Psoas muscle (tissue), 8 donors: ENCODE measurements at regions of chr9 and their contacts with region 1.

Region 1: GRCh38 chr9:120619751-120620655 is 40.0 kb upstream of the CDK5RAP2 start:
- DNase-seq: no peak
- ATAC-seq: peak; percentile 81 to 95 (median 83)
- H3K4me3 ChIP-seq: no peak overlapping the region
- H3K27ac ChIP-seq: no peak overlapping the region
- H3K4me1 ChIP-seq: peaks cover 3% of the 10 kb centered on the region
- H3K27me3 ChIP-seq: no peaks in the 10 kb centered on the region
- CTCF ChIP-seq: peak; percentile 87

Region 2: DNA sequence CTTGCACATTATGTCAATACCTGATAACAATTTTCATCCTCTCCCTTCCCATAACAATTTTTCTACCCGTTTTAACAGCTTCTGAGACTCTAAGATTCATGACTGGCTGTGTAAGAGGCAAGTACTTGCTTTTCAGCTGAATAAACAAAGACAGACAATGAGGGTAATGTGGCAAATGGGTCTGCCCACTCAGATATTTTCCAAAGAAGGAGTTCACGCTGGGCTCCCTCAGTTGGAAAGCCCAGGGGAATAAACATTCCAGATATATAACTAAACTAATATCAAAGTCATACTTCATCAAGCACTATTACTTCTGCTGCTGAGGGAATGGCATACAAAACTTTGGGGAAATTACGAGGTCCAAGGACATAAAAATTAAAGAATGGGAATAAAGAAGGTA is 69.9 kb after region 1 on chr9:
- intact Hi-C with region 1: loop called in 1 of 2 experiments (anchors 10 kb)
- DNase-seq: no peak
- ATAC-seq: no peak
- H3K4me3 ChIP-seq: no peak overlapping the region
- H3K27ac ChIP-seq: no peak overlapping the region
- H3K4me1 ChIP-seq: peaks cover 11% of the 10 kb centered on the region
- H3K27me3 ChIP-seq: no peaks in the 10 kb centered on the region
- CTCF ChIP-seq: no peak

Region 3: DNA sequence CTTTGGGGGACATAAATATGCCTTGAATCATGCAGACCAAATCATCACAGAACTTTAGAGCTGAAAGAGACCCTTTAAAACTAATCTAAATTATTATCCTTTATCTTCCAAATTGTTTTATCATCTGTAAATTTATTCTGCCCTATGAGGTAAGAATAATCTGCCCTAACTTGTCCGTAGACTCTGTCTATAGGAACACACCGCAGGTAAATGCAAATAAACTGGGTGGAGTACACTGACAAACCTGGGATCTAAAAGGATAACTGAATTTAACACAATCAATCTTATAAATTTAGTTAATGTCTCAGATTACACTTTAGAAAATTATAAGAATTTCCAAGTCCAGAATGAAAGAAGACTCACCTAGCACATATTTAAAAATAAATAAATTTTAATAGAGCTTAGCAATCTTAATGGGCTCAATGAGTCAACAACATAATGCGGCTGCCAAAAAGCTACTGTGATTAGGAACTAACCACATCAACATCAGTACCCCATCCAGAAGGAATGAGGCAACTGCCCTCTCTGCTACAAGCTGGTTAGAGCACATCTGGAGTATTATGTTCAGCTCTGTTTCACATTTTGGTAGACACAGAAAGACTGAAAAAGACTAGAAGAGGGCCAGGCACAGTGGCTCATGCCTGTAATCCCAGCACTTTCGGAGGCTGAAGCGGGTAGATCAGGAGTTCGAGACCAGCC is 88.7 kb after region 1 on chr9:
- intact Hi-C with region 1: loop called (anchors 10 kb)
- DNase-seq: no peak
- ATAC-seq: peak in 2 of 4 donors; percentile 25 to 27
- H3K4me3 ChIP-seq: no peak overlapping the region
- H3K27ac ChIP-seq: no peak overlapping the region
- H3K4me1 ChIP-seq: peaks cover 22% of the 10 kb centered on the region
- H3K27me3 ChIP-seq: no peaks in the 10 kb centered on the region
- CTCF ChIP-seq: no peak

Region 4: GRCh38 chr9:120714088-120714845 is 94.3 kb after region 1 on chr9 and contains the start of gene MEGF9:
- intact Hi-C with region 1: loop called (anchors 10 kb)
- DNase-seq: peak; percentile 98 to 99
- ATAC-seq: peak; percentile 96 to 98 (median 98)
- H3K4me3 ChIP-seq: peak within 1 kb of the TSS; percentile 83
- H3K27ac ChIP-seq: peak within 1 kb of the TSS; percentile 75
- H3K4me1 ChIP-seq: peaks cover 23% of the 10 kb centered on the region
- H3K27me3 ChIP-seq: no peaks in the 10 kb centered on the region
- CTCF ChIP-seq: no peak
- total RNA-seq, gene MEGF9: 6.1 to 11.4 (median 8.1) TPM

Region 5: DNA sequence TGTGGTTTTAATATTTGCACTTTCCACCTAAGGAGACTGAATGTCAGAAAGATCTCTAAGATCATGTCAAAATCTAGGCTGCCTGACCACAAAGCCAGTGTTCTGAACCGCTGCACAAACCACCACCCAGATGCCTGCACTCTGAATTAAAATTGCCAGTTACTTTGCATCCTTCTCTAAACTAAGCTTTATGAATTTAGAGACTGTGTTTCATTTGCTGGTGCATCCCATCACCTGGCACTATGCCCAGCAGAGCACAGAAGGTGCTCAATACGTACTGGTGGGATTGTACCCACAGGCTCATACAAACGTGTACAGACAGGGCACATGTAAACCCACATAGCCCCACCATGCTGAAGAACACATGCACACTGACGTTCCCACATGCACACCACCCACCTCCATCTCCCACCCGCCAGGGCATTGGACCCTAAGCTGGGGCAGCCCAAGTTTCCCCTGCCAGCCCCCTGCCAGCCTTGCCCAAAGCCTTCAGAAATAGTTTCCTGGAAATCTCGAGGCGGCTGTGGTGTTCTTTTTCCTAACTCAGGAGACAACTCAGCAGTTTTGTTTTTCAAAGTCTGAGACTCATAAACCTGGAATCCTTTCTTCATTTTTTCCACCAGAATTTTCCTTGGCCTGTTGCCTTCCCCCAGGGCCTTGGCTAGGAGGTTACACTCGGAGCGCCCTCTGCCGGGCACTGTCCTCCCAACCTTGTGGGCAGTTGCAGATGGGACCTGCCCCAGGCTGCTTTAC is 316.2 kb after region 1 on chr9:
- intact Hi-C with region 1: loop called in 1 of 2 experiments (anchors 5 kb)
- DNase-seq: peak; percentile 92 to 96
- ATAC-seq: peak; percentile 87 to 94 (median 91)
- H3K4me3 ChIP-seq: no peak overlapping the region
- H3K27ac ChIP-seq: peak overlapping the region; percentile 51
- H3K4me1 ChIP-seq: peaks cover 17% of the 10 kb centered on the region
- H3K27me3 ChIP-seq: peaks cover 0 to 1% (median 0%) of the 10 kb centered on the region in 3 donors
- CTCF ChIP-seq: peak; percentile 89